ENCODE measurements at regions of chr20 and their contacts with region 1.

Region 1: DNA sequence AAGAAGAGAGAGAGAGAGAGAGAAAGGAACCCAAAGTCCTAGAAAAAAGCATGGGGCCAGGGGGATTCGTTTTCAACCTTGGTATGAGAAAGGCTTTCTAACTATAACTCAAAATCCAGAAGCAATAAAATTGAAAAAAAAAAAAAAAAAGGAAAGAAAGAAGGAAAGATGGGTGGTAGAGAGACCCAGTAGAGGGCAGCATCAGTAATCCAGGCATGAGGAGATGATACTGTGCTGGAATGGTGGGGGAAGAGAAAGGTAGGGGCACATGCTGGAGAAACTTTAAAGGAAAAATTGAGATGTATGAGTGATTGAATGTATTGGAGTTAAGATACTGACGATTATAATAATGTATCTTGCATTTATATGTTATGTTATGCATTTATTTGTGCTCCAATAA is 1040.7 kb upstream of the FLRT3 start:
- DNase-seq: no peak
- H3K4me3 ChIP-seq: no peak overlapping the region
- H3K27ac ChIP-seq: no peak overlapping the region
- H3K4me1 ChIP-seq: no peaks in the 10 kb centered on the region
- H3K27me3 ChIP-seq: no peaks in the 10 kb centered on the region
- CTCF ChIP-seq: no peak
- POLR2A ChIP-seq: no peak

Region 2: DNA sequence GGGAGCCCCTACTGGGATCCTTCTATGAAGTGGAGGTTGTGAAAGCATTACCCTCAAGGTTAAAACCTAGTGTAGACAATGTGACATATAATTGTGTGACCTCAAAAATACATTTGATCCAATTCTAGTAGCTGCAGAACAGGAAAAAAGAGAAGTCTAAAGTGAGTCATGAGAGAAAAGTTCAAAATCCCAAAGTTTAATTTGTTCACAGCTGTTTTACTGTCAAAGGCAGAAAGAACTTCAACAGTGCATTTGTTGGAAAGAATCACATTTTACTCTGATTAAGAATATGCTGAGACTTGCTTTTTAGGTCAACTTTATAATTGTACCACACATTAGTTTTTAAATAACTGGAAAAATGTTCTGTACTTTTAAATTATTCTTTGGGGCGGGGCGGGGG is 13.4 kb before region 1 on chr20:
- CTCF ChIA-PET with region 1: no interaction called
- POLR2A ChIA-PET with region 1: no interaction called
- dilution Hi-C with region 1: no loop called
- intact Hi-C with region 1: no loop called
- DNase-seq: no peak
- H3K4me3 ChIP-seq: no peak overlapping the region
- H3K27ac ChIP-seq: no peak overlapping the region
- H3K4me1 ChIP-seq: no peaks in the 10 kb centered on the region
- H3K27me3 ChIP-seq: no peaks in the 10 kb centered on the region
- CTCF ChIP-seq: no peak
- POLR2A ChIP-seq: no peak

Region 3: GRCh38 chr20:15411781-15412180 is 33.6 kb after region 1 on chr20:
- CTCF ChIA-PET with region 1: no interaction called
- POLR2A ChIA-PET with region 1: no interaction called
- dilution Hi-C with region 1: no loop called
- intact Hi-C with region 1: no loop called
- DNase-seq: no peak
- H3K4me3 ChIP-seq: no peak overlapping the region
- H3K27ac ChIP-seq: no peak overlapping the region
- H3K4me1 ChIP-seq: no peaks in the 10 kb centered on the region
- H3K27me3 ChIP-seq: no peaks in the 10 kb centered on the region
- CTCF ChIP-seq: no peak
- POLR2A ChIP-seq: no peak

Region 4: DNA sequence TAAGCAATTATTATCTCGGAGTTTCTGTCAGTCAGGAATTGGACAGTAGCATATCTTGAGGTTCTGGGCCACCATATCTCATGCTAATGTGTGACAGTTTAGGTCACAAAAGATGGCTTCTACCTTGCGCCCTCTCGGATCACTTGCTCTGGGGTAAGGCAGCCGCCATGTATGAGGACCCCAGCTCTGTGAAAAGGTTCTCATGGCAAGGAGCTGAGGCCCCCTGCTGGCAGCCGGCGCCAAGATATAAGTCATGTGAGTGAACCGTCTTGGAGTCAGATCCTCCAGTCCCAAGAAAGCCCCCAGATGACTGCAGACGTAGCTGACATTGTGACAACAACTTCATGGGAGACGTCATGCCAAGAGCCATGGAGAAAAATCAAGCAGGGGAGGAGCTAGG is 524.3 kb after region 1 on chr20:
- CTCF ChIA-PET with region 1: no interaction called
- POLR2A ChIA-PET with region 1: no interaction called
- dilution Hi-C with region 1: no loop called
- intact Hi-C with region 1: loop called (anchors 5 kb)
- DNase-seq: peak; percentile 23
- H3K4me3 ChIP-seq: no peak overlapping the region
- H3K27ac ChIP-seq: no peak overlapping the region
- H3K4me1 ChIP-seq: no peaks in the 10 kb centered on the region
- H3K27me3 ChIP-seq: no peaks in the 10 kb centered on the region
- CTCF ChIP-seq: peak; percentile 35 to 43
- POLR2A ChIP-seq: no peak

Measured in endothelial cell of umbilical vein (primary cell).